CD4-positive, alpha-beta T cell (primary cell): ENCODE measurements at regions of chr2 and their contacts with region 1.

Region 1: DNA sequence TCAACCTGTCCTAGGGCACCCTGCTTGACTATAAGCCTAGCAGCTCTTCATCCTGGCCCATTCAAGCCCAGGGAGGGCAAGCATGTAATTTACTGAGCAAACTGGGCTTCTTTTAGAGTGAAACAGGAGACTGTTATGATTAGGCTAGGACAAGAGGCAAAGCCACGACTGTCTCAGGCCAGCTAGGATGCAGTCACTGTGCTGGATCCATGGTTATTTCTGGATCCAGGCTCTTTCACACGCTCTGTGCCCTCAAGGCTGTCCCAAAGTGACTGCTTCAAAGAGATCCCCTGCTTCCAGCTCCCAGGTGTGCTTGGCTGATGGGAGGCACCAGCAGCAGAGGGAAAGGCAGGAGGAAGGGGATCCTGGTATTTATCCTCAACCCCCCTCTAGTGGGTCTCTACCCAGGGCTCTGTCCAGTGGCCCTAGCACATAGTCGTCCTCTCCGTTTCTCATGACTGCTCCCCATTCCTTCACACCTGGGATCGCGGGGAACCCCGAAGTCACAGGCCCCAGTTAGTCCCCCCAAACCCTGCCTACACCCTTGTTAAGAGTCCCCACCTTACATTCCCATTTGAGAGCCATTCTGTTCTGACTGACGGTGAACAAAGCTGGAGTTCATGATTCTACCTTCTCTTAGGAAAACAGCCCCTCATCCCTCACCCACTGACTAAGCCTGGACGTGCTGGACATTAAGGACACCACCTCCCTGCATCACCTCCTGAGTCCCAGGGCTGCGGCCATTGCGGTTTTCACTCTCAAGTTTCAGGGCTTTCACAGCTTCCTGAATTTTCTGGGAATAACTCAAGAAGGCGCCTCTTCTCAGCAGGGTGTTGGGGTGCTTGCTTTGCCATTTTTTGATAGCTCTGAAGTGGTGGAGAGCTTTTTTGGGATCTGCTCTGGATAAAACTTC is 63.2 kb downstream of the POLR1A start:
- DNase-seq: no peak
- ATAC-seq: no peak
- H3K4me3 ChIP-seq: no peak overlapping the region
- H3K4me3 Mint-ChIP-seq: peak overlapping the region; percentile 32
- H3K27ac ChIP-seq: peak overlapping the region in 1 of 2 donors; percentile 46
- H3K27ac Mint-ChIP-seq: peak overlapping the region; percentile 97
- H3K4me1 ChIP-seq: peaks cover 44% of the 10 kb centered on the region
- H3K4me1 Mint-ChIP-seq: peaks cover 52% of the 10 kb centered on the region
- H3K27me3 ChIP-seq: no peaks in the 10 kb centered on the region
- H3K27me3 Mint-ChIP-seq: peaks cover 5% of the 10 kb centered on the region
- CTCF ChIP-seq: no peak

Region 2: DNA sequence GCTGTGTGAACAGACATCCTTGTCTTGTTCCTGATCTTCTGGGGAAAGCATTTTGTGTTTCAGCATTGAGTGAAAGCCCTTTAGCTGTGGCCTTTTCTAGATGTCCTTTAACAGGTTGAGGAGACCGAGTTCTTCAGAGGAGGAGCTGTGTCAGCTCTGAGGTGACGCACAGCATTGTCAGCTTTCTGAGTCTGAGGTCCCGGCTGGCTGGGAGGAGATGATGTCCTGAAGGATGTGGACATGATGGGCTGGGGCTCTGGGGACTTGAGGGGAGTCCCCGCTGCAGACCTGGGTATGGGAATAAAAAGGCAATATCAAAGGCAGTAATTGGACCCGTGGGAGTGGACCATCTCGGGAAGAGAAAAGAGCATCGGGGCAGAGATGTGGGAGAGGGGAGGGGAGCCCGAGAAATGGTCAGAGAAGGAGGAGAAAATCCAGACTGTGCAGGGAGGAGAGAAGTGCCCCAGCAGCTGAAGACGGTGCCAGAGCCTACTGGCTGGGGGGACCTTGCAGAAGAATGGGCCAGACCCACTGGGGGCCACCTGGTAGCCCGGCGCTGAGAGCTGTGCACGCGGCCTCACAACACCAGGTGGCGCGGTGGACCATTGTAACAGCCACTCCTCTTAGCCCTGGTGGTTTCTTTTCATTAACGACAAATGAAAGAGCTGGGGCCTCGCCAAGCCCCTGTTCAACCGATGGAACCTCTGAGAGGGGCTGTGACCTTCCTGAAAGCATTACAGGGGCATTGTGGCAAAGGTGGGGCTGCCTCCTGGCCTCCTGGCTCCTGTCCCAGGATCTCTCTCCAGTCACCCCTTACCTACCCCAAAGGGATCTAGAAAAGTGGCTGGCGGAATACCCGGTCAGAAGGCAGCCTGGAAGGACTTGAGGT is 215.3 kb before region 1 on chr2:
- CTCF ChIA-PET with region 1: interaction called, 10 read pairs
- POLR2A ChIA-PET with region 1: interaction called, 5 read pairs
- intact Hi-C with region 1: loop called (anchors 2 kb)
- DNase-seq: peak; percentile 74 to 90 (median 81)
- ATAC-seq: peak; percentile 100
- H3K4me3 ChIP-seq: no peak overlapping the region
- H3K4me3 Mint-ChIP-seq: no peak overlapping the region
- H3K27ac ChIP-seq: peak overlapping the region in 1 of 2 donors; percentile 5
- H3K27ac Mint-ChIP-seq: peak overlapping the region; percentile 49
- H3K4me1 ChIP-seq: peaks cover 10% of the 10 kb centered on the region
- H3K4me1 Mint-ChIP-seq: peaks cover 22% of the 10 kb centered on the region
- H3K27me3 ChIP-seq: no peaks in the 10 kb centered on the region
- H3K27me3 Mint-ChIP-seq: peaks cover 3% of the 10 kb centered on the region
- CTCF ChIP-seq: peak; percentile 92

Region 3: DNA sequence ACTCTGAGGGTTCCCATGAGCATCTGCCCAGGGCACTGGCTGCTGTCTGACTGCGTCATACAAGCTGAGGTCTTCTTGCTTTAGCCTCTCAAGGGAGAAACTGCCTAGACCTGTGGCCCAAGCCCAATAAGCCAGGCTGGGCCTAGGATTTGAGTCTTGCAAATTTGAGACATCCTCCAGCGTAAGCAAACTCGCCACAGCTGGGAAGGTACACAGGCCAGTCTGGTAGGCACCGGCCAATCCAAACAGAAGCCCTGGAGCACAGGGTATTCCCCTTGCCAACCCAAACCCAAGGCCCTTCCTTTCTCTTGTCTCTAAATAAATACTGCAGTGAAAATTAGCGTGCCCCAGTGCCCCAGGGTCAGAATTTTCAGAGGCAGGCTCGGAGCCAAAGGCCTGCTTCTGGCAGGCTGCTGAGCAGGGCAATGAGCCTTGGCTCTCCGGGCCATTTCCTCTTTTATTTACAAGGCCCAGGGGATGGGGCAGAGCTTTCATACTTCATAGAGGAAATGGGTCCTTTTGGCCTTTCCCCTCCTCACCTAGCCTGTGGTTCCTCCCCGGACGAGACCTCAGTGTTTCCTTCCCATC is 29.9 kb after region 1 on chr2:
- CTCF ChIA-PET with region 1: interaction called, 6 read pairs
- POLR2A ChIA-PET with region 1: interaction called, 3 read pairs
- intact Hi-C with region 1: loop called in 1 of 2 experiments (anchors 2 kb)
- DNase-seq: peak in 1 of 14 experiments; percentile 16
- ATAC-seq: no peak
- H3K4me3 ChIP-seq: no peak overlapping the region
- H3K4me3 Mint-ChIP-seq: no peak overlapping the region
- H3K27ac ChIP-seq: no peak overlapping the region
- H3K27ac Mint-ChIP-seq: peak overlapping the region; percentile 25
- H3K4me1 ChIP-seq: peaks cover 19% of the 10 kb centered on the region
- H3K4me1 Mint-ChIP-seq: peaks cover 14% of the 10 kb centered on the region
- H3K27me3 ChIP-seq: no peaks in the 10 kb centered on the region
- H3K27me3 Mint-ChIP-seq: no peaks in the 10 kb centered on the region
- CTCF ChIP-seq: no peak

Region 4: DNA sequence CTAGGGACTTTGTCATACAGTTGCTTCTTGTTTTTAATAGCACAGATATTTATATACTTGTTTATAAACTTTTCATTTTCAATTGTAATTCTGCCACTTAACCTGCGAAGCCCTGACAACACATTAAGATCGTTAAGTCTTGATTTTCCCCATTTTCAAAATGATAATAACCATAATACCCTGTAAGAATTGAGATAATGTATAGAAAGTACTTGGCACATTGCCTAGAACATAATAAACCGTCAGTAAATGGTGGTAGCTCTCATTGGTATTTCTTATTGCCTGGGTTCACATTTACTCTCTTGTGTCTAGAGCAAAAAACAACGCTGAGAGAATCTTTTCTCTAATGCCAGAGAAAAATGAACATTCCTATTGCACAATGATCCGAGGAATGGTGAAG is 82.2 kb after region 1 on chr2:
- CTCF ChIA-PET with region 1: no interaction called
- POLR2A ChIA-PET with region 1: no interaction called
- intact Hi-C with region 1: no loop called
- DNase-seq: no peak
- ATAC-seq: no peak
- H3K4me3 ChIP-seq: no peak overlapping the region
- H3K4me3 Mint-ChIP-seq: no peak overlapping the region
- H3K27ac ChIP-seq: no peak overlapping the region
- H3K27ac Mint-ChIP-seq: no peak overlapping the region
- H3K4me1 ChIP-seq: no peaks in the 10 kb centered on the region
- H3K4me1 Mint-ChIP-seq: no peaks in the 10 kb centered on the region
- H3K27me3 ChIP-seq: no peaks in the 10 kb centered on the region
- H3K27me3 Mint-ChIP-seq: no peaks in the 10 kb centered on the region
- CTCF ChIP-seq: no peak

Region 5: GRCh38 chr2:86632672-86633651 is 590.5 kb after region 1 on chr2:
- CTCF ChIA-PET with region 1: no interaction called
- POLR2A ChIA-PET with region 1: no interaction called
- intact Hi-C with region 1: no loop called
- DNase-seq: no peak
- ATAC-seq: no peak
- H3K4me3 ChIP-seq: no peak overlapping the region
- H3K4me3 Mint-ChIP-seq: no peak overlapping the region
- H3K27ac ChIP-seq: no peak overlapping the region
- H3K27ac Mint-ChIP-seq: no peak overlapping the region
- H3K4me1 ChIP-seq: no peaks in the 10 kb centered on the region
- H3K4me1 Mint-ChIP-seq: no peaks in the 10 kb centered on the region
- H3K27me3 ChIP-seq: no peaks in the 10 kb centered on the region
- H3K27me3 Mint-ChIP-seq: peaks cover 18% of the 10 kb centered on the region
- CTCF ChIP-seq: no peak